Ovary (tissue), 10 donors: ENCODE measurements at regions of chr7 and their contacts with region 1.

Region 1: GRCh38 chr7:154913638-154914312 is 89.1 kb downstream of the PAXIP1 start:
- DNase-seq: peak; percentile 74 to 90 (median 87)
- H3K4me3 ChIP-seq: no peak overlapping the region
- H3K27ac ChIP-seq: no peak overlapping the region
- H3K4me1 ChIP-seq: no peaks in the 10 kb centered on the region
- H3K27me3 ChIP-seq: no peaks in the 10 kb centered on the region
- CTCF ChIP-seq: peak; percentile 55 to 82 (median 70)
- EP300 ChIP-seq: no peak
- POLR2A ChIP-seq: no peak

Region 2: DNA sequence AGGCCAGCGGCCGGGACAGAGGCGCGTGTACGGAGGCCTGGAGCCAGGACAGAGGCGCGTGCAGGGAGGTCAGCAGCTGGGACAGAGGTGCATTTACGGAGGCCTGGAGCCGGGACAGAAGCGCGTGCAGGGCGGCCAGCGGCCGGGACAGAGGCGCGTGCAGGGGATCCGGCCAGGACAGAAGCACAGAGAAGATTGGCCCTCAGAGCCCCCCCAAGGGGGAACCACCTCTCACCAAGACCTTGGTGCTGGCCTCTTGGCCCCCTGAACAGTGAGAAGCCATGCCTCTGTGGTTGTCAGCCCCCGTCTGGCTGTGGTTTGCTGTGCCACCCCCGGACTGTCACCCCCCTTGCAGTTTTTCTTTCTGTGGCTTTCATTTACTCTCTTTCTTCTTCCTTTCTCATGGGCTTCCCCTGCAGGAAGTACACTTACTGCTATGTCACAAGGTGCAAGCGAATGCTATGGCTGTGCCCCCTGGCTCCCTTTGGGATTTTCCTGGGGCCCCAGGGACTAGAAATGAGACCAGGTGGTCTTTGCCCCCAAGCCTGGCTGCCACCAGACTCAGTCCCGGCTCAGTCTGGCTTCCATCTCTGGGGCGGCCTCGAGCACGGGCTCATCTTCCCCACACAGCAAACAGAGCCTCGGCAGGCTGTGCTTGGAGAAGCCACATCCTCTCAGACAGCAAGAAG is 425.0 kb after region 1 on chr7:
- intact Hi-C with region 1: loop called in 1 of 4 experiments (anchors 5 kb)
- DNase-seq: no peak
- H3K4me3 ChIP-seq: no peak overlapping the region
- H3K27ac ChIP-seq: no peak overlapping the region
- H3K4me1 ChIP-seq: no peaks in the 10 kb centered on the region
- H3K27me3 ChIP-seq: no peaks in the 10 kb centered on the region
- CTCF ChIP-seq: no peak
- EP300 ChIP-seq: no peak
- POLR2A ChIP-seq: no peak

Region 3: DNA sequence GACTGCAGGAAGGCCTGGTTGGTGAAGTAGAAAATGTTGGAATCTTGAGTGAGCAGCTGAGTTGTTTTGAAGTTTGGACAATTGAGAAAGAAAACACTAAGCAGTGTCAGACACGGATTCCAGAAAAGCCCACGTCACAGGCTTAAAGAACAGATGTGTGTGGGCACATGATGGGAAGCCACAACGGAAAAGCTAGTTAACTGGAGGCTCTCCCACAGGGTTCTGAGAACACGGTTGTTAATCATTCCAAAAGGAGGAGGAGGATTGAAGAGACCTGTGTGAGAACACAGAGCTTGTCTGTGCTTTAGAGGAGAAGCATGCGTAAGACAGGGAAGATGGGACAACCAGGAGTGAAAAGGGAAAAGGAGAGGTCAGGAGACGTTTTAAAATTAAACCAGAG is 855.9 kb after region 1 on chr7:
- intact Hi-C with region 1: loop called in 1 of 4 experiments (anchors 10 kb)
- DNase-seq: no peak
- H3K4me3 ChIP-seq: no peak overlapping the region
- H3K27ac ChIP-seq: no peak overlapping the region
- H3K4me1 ChIP-seq: no peaks in the 10 kb centered on the region
- H3K27me3 ChIP-seq: no peaks in the 10 kb centered on the region
- CTCF ChIP-seq: no peak
- EP300 ChIP-seq: no peak
- POLR2A ChIP-seq: no peak